ENCODE measurements at regions of chr10 and their contacts with region 1.

Region 1: DNA sequence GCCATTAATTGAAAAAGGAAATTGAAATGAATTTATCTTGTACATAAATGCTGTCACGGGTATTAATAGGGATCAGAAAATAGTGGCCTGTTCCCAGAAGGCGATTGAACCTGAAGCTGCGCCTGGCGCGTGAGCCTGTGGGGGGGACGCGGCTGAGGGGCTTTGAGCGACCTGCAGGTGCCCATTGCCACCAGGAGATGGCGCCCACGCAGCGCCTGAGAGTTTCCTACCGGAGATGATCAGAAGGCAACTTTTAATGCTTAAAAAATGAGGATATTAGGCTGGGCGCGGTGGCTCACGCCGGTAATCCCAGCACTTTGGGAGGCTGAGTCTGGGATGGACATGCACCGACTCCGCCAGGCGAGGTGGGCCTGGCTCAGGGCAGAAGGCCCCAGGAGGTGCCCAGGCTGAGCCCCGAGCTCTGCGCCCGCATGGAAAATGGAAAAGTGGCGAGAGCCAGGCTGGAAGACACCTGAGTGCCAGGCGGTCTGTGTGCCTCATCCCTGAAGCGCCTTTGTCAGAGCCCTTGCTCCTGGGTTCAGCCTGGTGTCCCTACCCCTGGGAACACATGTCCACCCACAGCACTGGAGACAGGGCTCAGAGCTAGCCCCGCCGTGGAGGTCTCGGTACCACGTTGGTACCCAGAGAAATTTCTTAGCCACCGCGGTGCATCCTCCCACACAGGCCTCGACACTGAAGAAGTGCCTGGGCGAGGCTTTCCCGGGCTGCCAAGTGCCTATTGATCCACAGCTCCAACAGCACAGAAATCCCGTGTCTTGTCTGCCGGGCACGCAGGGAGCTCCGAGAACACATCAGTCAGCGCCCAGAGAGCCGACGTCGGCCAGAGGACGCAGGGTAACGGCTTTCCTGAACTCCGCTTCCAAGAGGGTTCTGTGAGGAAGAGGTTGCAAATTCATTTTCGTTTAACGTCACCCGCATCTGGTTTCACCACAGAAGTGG is 117.4 kb downstream of the INPP5A start:
- DNase-seq: peak; percentile 60 to 86
- ATAC-seq: peak; percentile 63 to 90
- H3K4me3 ChIP-seq: no peak overlapping the region
- H3K27ac ChIP-seq: no peak overlapping the region
- H3K4me1 ChIP-seq: no peaks in the 10 kb centered on the region
- CTCF ChIP-seq: peak; percentile 94
- EP300 ChIP-seq: no peak
- POLR2A ChIP-seq: no peak
- RAD21 ChIP-seq: peak; percentile 94 to 97

Region 2: DNA sequence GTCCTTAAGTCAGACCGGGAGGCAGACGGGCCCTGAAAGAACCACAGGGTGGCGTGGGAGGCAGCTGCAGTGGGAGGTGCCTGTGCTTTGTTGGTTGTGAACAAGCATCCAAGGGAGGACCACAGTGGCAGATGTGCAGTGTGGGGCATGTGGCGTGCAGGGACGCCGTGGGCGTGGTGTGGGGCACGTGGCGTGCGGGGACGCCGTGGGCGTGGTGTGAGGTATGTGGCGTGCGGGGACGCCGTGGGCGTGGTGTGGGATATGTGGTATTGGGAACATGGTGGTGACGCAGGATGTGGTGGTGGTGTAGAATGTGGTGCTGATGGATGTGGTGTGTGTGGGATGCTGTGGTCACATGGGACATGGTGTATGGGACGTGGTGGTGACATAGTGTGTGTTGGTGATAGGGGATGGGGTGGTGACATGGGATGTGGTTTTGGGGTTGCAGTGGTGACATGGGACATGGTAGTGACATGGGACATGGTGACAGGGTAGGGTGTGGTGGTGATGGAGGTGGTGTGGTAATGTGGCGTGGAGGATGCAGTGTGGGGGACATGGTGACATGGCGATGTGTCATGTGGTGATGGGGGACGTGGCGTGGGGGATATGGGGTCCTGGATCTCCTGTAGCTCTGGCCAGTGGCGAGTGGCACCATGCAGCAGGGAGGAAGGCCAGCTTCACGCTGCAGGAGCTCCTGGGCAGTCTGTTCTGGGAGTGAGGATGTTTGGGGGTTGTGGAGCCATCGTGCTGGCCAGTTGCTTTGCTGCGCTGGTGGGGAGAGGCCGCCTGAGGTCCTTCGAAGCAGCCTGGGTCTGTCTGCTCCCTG is 38.6 kb before region 1 on chr10:
- CTCF ChIA-PET with region 1: interaction called, 10 read pairs
- POLR2A ChIA-PET with region 1: no interaction called
- DNase-seq: no peak
- ATAC-seq: no peak
- H3K4me3 ChIP-seq: no peak overlapping the region
- H3K27ac ChIP-seq: no peak overlapping the region
- H3K4me1 ChIP-seq: no peaks in the 10 kb centered on the region
- CTCF ChIP-seq: no peak
- EP300 ChIP-seq: no peak
- POLR2A ChIP-seq: no peak
- RAD21 ChIP-seq: no peak

Region 3: GRCh38 chr10:132665946-132666704 is 11.1 kb after region 1 on chr10:
- CTCF ChIA-PET with region 1: interaction called, 61 read pairs
- POLR2A ChIA-PET with region 1: no interaction called
- DNase-seq: peak; percentile 71 to 82
- ATAC-seq: peak; percentile 83 to 90
- H3K4me3 ChIP-seq: no peak overlapping the region
- H3K27ac ChIP-seq: peak overlapping the region; percentile 65 to 84
- H3K4me1 ChIP-seq: peaks cover 31% of the 10 kb centered on the region
- CTCF ChIP-seq: no peak
- EP300 ChIP-seq: no peak
- POLR2A ChIP-seq: no peak
- RAD21 ChIP-seq: no peak

Region 4: DNA sequence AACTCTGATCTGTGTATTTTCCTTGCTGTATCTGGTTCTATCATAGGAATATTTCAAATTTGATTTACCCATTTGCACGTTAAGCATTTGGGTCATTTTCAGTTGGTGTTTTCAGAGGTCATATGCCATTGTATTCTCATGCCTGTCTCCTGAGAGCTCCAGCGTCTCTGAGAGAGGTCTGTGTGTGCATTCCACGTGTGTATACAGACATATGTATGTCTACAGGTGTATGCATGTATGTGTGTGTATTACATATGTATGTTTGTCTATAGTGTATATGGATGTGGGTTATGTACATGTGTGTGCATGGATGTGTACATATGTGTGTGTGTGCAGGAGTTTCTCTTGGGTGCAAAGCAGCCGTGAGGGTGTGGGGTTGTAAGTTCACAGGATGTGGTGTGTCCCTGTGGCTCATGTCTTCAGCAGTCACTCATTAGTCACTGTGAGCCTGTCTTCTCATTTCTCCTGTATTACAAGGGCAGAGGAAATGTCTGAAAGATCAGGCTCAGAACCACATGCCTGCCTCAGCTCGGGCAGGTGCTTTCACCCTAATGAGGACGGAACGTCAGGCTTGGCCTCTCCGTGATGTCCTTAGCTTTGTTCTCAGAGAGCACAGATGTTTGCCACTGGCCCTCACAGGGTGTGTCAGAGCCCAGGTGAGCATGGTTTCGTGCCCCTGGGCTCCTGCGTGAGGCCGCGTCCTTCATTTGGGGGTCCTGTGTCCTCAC is 29.3 kb after region 1 on chr10:
- CTCF ChIA-PET with region 1: interaction called, 14 read pairs
- POLR2A ChIA-PET with region 1: no interaction called
- DNase-seq: no peak
- ATAC-seq: peak in 1 of 2 experiments; percentile 28; a peak in 1 of 6 replicates
- H3K4me3 ChIP-seq: no peak overlapping the region
- H3K27ac ChIP-seq: peak overlapping the region in 1 of 2 experiments; percentile 8; a peak in 1 of 6 replicates
- H3K4me1 ChIP-seq: peaks cover 13% of the 10 kb centered on the region
- CTCF ChIP-seq: no peak
- EP300 ChIP-seq: no peak
- POLR2A ChIP-seq: no peak
- RAD21 ChIP-seq: no peak

Region 5: DNA sequence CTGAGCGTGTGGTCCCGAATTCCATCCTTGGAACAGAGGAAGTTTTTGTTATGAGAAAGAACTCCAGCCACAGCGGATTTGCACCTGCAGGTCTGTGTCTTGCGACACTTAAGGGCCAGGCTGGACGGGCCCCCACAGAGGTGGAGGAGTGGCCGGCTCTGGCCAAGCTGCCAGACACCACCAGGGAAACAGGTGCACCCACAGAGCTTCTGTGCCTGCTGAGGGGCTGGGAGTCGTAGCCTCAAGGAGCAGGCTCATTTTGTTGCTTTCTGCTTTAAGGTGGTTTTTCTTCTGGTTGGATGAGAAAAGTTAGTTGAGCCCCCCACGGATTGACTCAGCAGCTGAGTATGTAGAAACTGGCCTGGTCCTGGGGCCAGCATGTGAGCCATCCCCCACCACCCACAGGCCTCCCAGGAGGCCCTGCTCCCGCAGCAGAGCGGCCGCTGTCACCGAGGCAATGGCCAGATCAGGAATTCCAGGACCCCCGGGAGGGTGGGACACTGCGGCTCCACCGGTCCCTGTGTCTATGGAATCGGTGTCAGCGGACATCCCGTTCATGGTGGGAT is 89.0 kb after region 1 on chr10:
- CTCF ChIA-PET with region 1: interaction called, 10 read pairs
- POLR2A ChIA-PET with region 1: no interaction called
- DNase-seq: no peak
- ATAC-seq: no peak
- H3K4me3 ChIP-seq: no peak overlapping the region
- H3K27ac ChIP-seq: no peak overlapping the region
- H3K4me1 ChIP-seq: no peaks in the 10 kb centered on the region
- CTCF ChIP-seq: no peak
- EP300 ChIP-seq: no peak
- POLR2A ChIP-seq: no peak
- RAD21 ChIP-seq: no peak

Region 6: GRCh38 chr10:132788180-132788830 is 133.3 kb after region 1 on chr10:
- CTCF ChIA-PET with region 1: interaction called, 56 read pairs
- POLR2A ChIA-PET with region 1: no interaction called
- DNase-seq: peak; percentile 40 to 55
- ATAC-seq: peak; percentile 41 to 70; a peak in 5 of 6 replicates
- H3K4me3 ChIP-seq: peak overlapping the region; percentile 35
- H3K27ac ChIP-seq: no peak overlapping the region
- H3K4me1 ChIP-seq: peaks cover 26% of the 10 kb centered on the region
- CTCF ChIP-seq: peak; percentile 16; the same call in 1 of the 3 replicates
- EP300 ChIP-seq: no peak
- POLR2A ChIP-seq: no peak
- RAD21 ChIP-seq: peak; percentile 32 to 52; a peak in 4 of 5 replicates

Region 7: GRCh38 chr10:132886211-132887099 is 231.5 kb after region 1 on chr10:
- CTCF ChIA-PET with region 1: interaction called, 28 read pairs
- POLR2A ChIA-PET with region 1: no interaction called
- DNase-seq: peak; percentile 44 to 67
- ATAC-seq: peak; percentile 81 to 90
- H3K4me3 ChIP-seq: no peak overlapping the region
- H3K27ac ChIP-seq: no peak overlapping the region
- H3K4me1 ChIP-seq: no peaks in the 10 kb centered on the region
- CTCF ChIP-seq: peak; percentile 39
- EP300 ChIP-seq: no peak
- POLR2A ChIP-seq: no peak
- RAD21 ChIP-seq: peak; percentile 42 to 50